Activated CD4-positive, alpha-beta T cell treated with anti-CD3 and anti-CD28 coated beads for 36 hours (primary cell): ENCODE measurements at regions of chr22 and their contacts with region 1.

Region 1: DNA sequence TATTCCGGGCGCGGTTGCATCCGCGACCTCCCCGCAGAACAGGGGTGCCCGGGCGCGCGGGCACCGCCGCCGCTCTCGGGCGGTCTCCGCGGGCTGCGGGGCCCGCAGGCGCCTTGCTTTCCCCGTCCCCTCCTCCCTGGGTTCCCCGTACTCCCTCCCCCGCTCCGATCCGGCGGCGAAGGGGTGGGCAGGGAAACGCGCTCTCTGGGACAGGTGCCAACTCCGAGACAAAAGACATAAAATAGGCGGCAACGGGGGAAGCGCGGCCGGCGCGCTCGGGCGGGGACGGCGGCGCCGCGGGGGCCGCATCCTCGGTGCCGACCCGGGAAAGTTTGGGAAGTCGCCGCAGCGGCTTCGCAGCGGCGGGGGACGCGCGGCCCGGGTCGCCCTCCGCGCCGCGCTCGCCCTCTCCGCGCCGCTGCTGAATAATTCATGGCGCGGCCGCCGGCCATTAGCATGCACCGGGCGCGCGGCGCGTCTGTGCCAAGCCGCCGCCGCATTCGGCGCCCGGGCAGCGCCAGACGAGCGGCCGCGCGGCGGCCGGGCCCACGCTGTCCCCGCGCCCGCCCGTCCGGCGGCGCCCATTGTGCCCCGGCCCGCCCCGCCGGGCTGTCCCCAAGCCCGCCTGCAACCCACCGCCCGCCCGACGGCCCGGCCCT is 78.7 kb upstream of the PPARA start:
- DNase-seq: peak; percentile 80
- ATAC-seq: peak; percentile 30
- H3K4me3 Mint-ChIP-seq: peak overlapping the region; percentile 74
- H3K27ac Mint-ChIP-seq: peak overlapping the region; percentile 69
- H3K4me1 Mint-ChIP-seq: peaks cover 40% of the 10 kb centered on the region
- H3K27me3 Mint-ChIP-seq: no peaks in the 10 kb centered on the region

Region 2: GRCh38 chr22:46013460-46014416 is 57.8 kb before region 1 on chr22:
- CTCF ChIA-PET with region 1: interaction called, 7 read pairs
- POLR2A ChIA-PET with region 1: interaction called, 4 read pairs
- intact Hi-C with region 1: loop called (anchors 1 to 5 kb)
- DNase-seq: peak; percentile 96
- ATAC-seq: peak; percentile 99
- H3K4me3 Mint-ChIP-seq: peak overlapping the region; percentile 80
- H3K27ac Mint-ChIP-seq: peak overlapping the region; percentile 86
- H3K4me1 Mint-ChIP-seq: peaks cover 4% of the 10 kb centered on the region
- H3K27me3 Mint-ChIP-seq: no peaks in the 10 kb centered on the region

Region 3: GRCh38 chr22:46057762-46058420 is 13.7 kb before region 1 on chr22:
- CTCF ChIA-PET with region 1: interaction called, 4 read pairs
- POLR2A ChIA-PET with region 1: interaction called, 6 read pairs
- intact Hi-C with region 1: loop called (anchors 1 to 2 kb)
- DNase-seq: peak; percentile 66
- ATAC-seq: peak; percentile 82
- H3K4me3 Mint-ChIP-seq: peak overlapping the region; percentile 28
- H3K27ac Mint-ChIP-seq: peak overlapping the region; percentile 79
- H3K4me1 Mint-ChIP-seq: peaks cover 48% of the 10 kb centered on the region
- H3K27me3 Mint-ChIP-seq: no peaks in the 10 kb centered on the region

Region 4: GRCh38 chr22:46088541-46089311 is 17.1 kb after region 1 on chr22:
- CTCF ChIA-PET with region 1: no interaction called
- POLR2A ChIA-PET with region 1: no interaction called
- intact Hi-C with region 1: no loop called
- DNase-seq: no peak
- ATAC-seq: no peak
- H3K4me3 Mint-ChIP-seq: no peak overlapping the region
- H3K27ac Mint-ChIP-seq: no peak overlapping the region
- H3K4me1 Mint-ChIP-seq: no peaks in the 10 kb centered on the region
- H3K27me3 Mint-ChIP-seq: no peaks in the 10 kb centered on the region

Region 5: GRCh38 chr22:46335201-46336118 is 263.9 kb after region 1 on chr22 and contains the start of gene TRMU:
- CTCF ChIA-PET with region 1: no interaction called
- POLR2A ChIA-PET with region 1: no interaction called
- intact Hi-C with region 1: loop called in 1 of 2 experiments (anchors 2 kb)
- DNase-seq: peak; percentile 86
- ATAC-seq: peak; percentile 89
- H3K4me3 Mint-ChIP-seq: peak within 1 kb of the TSS; percentile 99
- H3K27ac Mint-ChIP-seq: peak within 1 kb of the TSS; percentile 94
- H3K4me1 Mint-ChIP-seq: peaks cover 35% of the 10 kb centered on the region
- H3K27me3 Mint-ChIP-seq: no peaks in the 10 kb centered on the region
- total RNA-seq, gene TRMU: 61.4 to 75.3 TPM